Activated naive CD8-positive, alpha-beta T cell treated with anti-CD3 and anti-CD28 coated beads, Interleukin-2, amount 10 ng/mL, durations not matched to agents 7 days and 5 days (primary cell): ENCODE measurements at regions of chr2 and their contacts with region 1.

Region 1: GRCh38 chr2:196277002-196277401 is 105.6 kb upstream of the STK17B start:
- DNase-seq: no peak
- ATAC-seq: peak; percentile 28
- H3K4me3 Mint-ChIP-seq: peak overlapping the region; percentile 82
- H3K27ac Mint-ChIP-seq: peak overlapping the region; percentile 52
- H3K4me1 Mint-ChIP-seq: peaks cover 43% of the 10 kb centered on the region
- H3K27me3 Mint-ChIP-seq: no peaks in the 10 kb centered on the region

Region 2: DNA sequence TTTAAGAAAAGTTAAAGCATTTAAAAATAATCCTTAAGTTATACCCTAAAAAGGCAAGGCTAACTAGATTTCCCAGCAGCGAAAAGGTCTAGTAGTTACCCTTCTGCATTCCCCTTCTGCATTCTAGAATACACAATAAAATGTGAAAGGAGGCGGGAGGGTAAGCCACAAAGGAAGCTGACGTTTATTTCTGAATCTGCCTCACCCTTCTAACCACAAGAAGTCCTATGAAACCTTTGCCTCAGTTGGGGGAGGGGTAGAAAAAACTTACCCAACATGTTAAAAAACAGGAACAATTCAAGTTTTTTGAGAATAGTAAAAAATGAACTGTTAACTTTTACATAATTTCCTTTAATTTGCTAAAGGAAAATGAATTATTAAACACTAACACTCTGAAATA is 116.9 kb before region 1 on chr2:
- POLR2A ChIA-PET with region 1: interaction called, 53 read pairs
- DNase-seq: no peak
- ATAC-seq: peak; percentile 20
- H3K4me3 Mint-ChIP-seq: peak overlapping the region; percentile 89
- H3K27ac Mint-ChIP-seq: peak overlapping the region; percentile 92
- H3K4me1 Mint-ChIP-seq: peaks cover 60% of the 10 kb centered on the region
- H3K27me3 Mint-ChIP-seq: no peaks in the 10 kb centered on the region

Region 3: GRCh38 chr2:196182439-196183171 is 94.4 kb before region 1 on chr2:
- POLR2A ChIA-PET with region 1: interaction called, 14 read pairs
- DNase-seq: no peak
- ATAC-seq: peak; percentile 10
- H3K4me3 Mint-ChIP-seq: peak overlapping the region; percentile 84
- H3K27ac Mint-ChIP-seq: peak overlapping the region; percentile 96
- H3K4me1 Mint-ChIP-seq: peaks cover 62% of the 10 kb centered on the region
- H3K27me3 Mint-ChIP-seq: no peaks in the 10 kb centered on the region

Region 4: GRCh38 chr2:196205881-196206435 is 71.0 kb before region 1 on chr2:
- POLR2A ChIA-PET with region 1: interaction called, 12 read pairs
- DNase-seq: no peak
- ATAC-seq: no peak
- H3K4me3 Mint-ChIP-seq: no peak overlapping the region
- H3K27ac Mint-ChIP-seq: no peak overlapping the region
- H3K4me1 Mint-ChIP-seq: peaks cover 30% of the 10 kb centered on the region
- H3K27me3 Mint-ChIP-seq: no peaks in the 10 kb centered on the region

Region 5: GRCh38 chr2:196220671-196221070 is 56.3 kb before region 1 on chr2:
- POLR2A ChIA-PET with region 1: interaction called, 14 read pairs
- DNase-seq: no peak
- ATAC-seq: peak; percentile 88
- H3K4me3 Mint-ChIP-seq: peak overlapping the region; percentile 6
- H3K27ac Mint-ChIP-seq: peak overlapping the region; percentile 1
- H3K4me1 Mint-ChIP-seq: peaks cover 51% of the 10 kb centered on the region
- H3K27me3 Mint-ChIP-seq: no peaks in the 10 kb centered on the region

Region 6: GRCh38 chr2:196233021-196233804 is 43.8 kb before region 1 on chr2:
- POLR2A ChIA-PET with region 1: interaction called, 10 read pairs
- DNase-seq: no peak
- ATAC-seq: no peak
- H3K4me3 Mint-ChIP-seq: peak overlapping the region; percentile 55
- H3K27ac Mint-ChIP-seq: peak overlapping the region; percentile 88
- H3K4me1 Mint-ChIP-seq: peaks cover 82% of the 10 kb centered on the region
- H3K27me3 Mint-ChIP-seq: no peaks in the 10 kb centered on the region

Region 7: GRCh38 chr2:196239622-196240587 is 37.1 kb before region 1 on chr2:
- POLR2A ChIA-PET with region 1: interaction called, 27 read pairs
- DNase-seq: peak; percentile 80
- ATAC-seq: peak; percentile 62
- H3K4me3 Mint-ChIP-seq: peak overlapping the region; percentile 78
- H3K27ac Mint-ChIP-seq: peak overlapping the region; percentile 93
- H3K4me1 Mint-ChIP-seq: peaks cover 70% of the 10 kb centered on the region
- H3K27me3 Mint-ChIP-seq: no peaks in the 10 kb centered on the region